OCI-LY7 (cell line): ENCODE measurements at regions of chr15 and their contacts with region 1.

Region 1: GRCh38 chr15:34209421-34210282 is at the start of gene KATNBL1:
- DNase-seq: peak; percentile 97
- H3K4me3 ChIP-seq: peak within 1 kb of the TSS; percentile 79
- H3K27ac ChIP-seq: peak within 1 kb of the TSS; percentile 54
- H3K4me1 ChIP-seq: peaks cover 14% of the 10 kb centered on the region
- CTCF ChIP-seq: peak; percentile 85
- total RNA-seq, gene KATNBL1: 44.8 and 47.5 TPM in 2 replicates

Region 2: GRCh38 chr15:34056936-34057335 is 152.7 kb before region 1 on chr15:
- CTCF ChIA-PET with region 1: no interaction called
- POLR2A ChIA-PET with region 1: no interaction called
- intact Hi-C with region 1: loop called (anchors 1 kb)
- DNase-seq: no peak
- H3K4me3 ChIP-seq: no peak overlapping the region
- H3K27ac ChIP-seq: no peak overlapping the region
- H3K4me1 ChIP-seq: no peaks in the 10 kb centered on the region
- CTCF ChIP-seq: no peak

Region 3: GRCh38 chr15:34101366-34102175 is 108.1 kb before region 1 on chr15 and contains the starts of genes EMC7 and PGBD4:
- CTCF ChIA-PET with region 1: no interaction called
- POLR2A ChIA-PET with region 1: interaction called, 8 read pairs
- intact Hi-C with region 1: loop called (anchors 5 kb)
- DNase-seq: peak; percentile 98
- H3K4me3 ChIP-seq: peak within 1 kb of the TSS; percentile 90
- H3K27ac ChIP-seq: peak within 1 kb of the TSS; percentile 29
- H3K4me1 ChIP-seq: peaks cover 24% of the 10 kb centered on the region
- CTCF ChIP-seq: no peak
- total RNA-seq, gene EMC7: 14.7 and 15.7 TPM in 2 replicates
- total RNA-seq, gene PGBD4: 3.6 and 4.4 TPM in 2 replicates

Region 4: GRCh38 chr15:34109797-34110663 is 99.6 kb before region 1 on chr15:
- CTCF ChIA-PET with region 1: interaction called, 4 read pairs
- POLR2A ChIA-PET with region 1: interaction called, 11 read pairs
- intact Hi-C with region 1: loop called (anchors 1 kb)
- DNase-seq: peak; percentile 49
- H3K4me3 ChIP-seq: no peak overlapping the region
- H3K27ac ChIP-seq: no peak overlapping the region
- H3K4me1 ChIP-seq: no peaks in the 10 kb centered on the region
- CTCF ChIP-seq: peak; percentile 92

Region 5: GRCh38 chr15:34246276-34246976 is 36.8 kb after region 1 on chr15:
- CTCF ChIA-PET with region 1: no interaction called
- POLR2A ChIA-PET with region 1: no interaction called
- intact Hi-C with region 1: no loop called
- DNase-seq: no peak
- H3K4me3 ChIP-seq: no peak overlapping the region
- H3K27ac ChIP-seq: no peak overlapping the region
- H3K4me1 ChIP-seq: no peaks in the 10 kb centered on the region
- CTCF ChIP-seq: no peak

Region 6: DNA sequence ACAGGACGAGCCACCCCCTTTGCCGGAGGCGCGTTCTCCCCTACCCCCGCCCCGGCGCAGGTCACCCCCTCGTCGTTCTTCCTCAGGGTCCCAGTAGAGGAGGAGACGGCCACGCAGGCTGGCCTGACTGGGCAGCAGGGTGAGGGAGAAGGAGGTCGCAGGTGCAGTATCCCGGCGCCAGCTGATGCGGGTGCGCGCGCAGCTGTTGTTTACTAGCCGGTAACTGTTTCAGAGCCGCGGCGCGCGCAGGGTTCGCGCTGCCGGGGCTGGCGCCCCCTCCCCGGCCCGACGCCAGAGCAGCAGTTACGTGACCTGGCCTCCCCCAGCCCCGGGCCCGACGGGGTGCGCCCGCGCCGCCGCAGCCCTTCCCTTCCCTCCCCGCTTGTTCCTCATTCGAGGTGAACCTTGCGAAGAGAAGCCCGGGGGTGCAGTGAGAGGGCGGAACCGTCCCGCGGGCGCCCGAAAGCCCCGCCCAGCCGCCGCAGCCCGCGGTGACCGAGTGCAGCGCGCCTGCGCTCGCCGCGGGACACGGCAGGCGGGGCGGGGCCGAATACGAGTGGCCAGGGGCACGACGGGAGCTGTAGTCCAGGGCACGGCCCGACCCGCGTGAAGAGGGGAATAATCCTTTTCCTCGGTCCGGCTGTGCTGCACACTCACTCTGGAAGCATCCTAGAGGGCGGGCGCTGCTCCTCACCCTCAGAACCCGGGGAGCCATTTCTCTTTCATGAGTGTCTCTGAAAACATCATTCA is 128.1 kb after region 1 on chr15 and contains the start of gene SLC12A6:
- CTCF ChIA-PET with region 1: no interaction called
- POLR2A ChIA-PET with region 1: no interaction called
- intact Hi-C with region 1: loop called (anchors 5 kb)
- DNase-seq: peak; percentile 90
- H3K4me3 ChIP-seq: peak within 1 kb of the TSS; percentile 90
- H3K27ac ChIP-seq: peak within 1 kb of the TSS; percentile 65
- H3K4me1 ChIP-seq: peaks cover 49% of the 10 kb centered on the region
- CTCF ChIP-seq: 0 out of 2 replicates have a peak, but pooled peaks have one; percentile 15
- total RNA-seq, gene SLC12A6: 8.9 and 11.5 TPM in 2 replicates

Region 7: DNA sequence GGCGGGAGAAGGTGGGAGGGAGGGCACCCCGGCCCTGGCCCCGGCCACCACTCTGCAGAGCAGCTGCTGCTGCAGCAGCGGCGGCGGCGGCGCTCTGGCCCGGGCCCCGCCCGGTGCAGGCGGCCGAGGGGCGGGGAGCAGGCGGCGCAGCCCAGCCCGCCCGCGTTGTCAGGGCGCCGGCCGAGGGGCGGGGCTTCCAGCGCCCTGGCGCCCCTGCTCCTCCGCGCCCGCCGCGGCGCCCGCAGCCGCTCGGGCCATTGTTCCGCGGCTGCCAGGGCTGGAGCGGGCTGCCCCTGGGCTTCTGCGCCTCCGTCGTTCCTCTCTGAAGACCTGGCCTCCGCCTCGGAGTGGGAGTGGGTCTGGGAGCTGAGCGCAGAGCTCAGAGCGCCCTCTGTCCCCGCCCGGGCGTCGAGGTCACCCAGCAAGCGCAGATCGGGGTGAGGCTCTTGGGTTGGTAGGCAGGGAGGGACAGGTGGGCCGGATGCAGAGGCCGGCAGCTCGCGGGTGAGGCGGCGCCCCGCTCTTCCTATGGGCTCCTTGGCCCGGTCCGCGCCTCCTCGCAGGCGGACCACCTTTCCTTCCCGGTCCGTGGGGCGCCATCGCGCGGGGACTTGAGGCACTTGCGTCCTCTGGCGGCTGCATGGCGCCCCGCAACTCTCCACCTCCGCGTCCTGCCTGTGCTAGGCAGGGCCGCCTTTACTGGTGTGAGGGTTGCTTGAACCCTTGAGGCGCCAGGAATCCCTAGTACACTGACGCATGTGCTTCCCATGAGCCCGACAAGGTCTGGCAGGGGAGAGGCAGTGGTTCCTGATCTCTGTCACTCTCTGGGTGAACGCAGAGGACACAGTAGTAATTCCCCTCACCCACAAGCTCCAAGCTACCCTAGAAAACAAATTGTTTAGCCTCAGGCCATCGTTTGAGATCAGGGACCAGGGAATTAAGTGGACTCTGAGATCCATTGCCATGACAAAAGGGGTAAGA is 157.7 kb after region 1 on chr15 and contains the start of gene LPCAT4:
- CTCF ChIA-PET with region 1: no interaction called
- POLR2A ChIA-PET with region 1: interaction called, 6 read pairs
- intact Hi-C with region 1: loop called (anchors 10 kb)
- DNase-seq: peak; percentile 95
- H3K4me3 ChIP-seq: peak within 1 kb of the TSS; percentile 99
- H3K27ac ChIP-seq: peak within 1 kb of the TSS; percentile 90
- H3K4me1 ChIP-seq: peaks cover 18% of the 10 kb centered on the region
- CTCF ChIP-seq: peak; percentile 91
- total RNA-seq, gene LPCAT4: 27.8 and 44.3 TPM in 2 replicates

Region 8: DNA sequence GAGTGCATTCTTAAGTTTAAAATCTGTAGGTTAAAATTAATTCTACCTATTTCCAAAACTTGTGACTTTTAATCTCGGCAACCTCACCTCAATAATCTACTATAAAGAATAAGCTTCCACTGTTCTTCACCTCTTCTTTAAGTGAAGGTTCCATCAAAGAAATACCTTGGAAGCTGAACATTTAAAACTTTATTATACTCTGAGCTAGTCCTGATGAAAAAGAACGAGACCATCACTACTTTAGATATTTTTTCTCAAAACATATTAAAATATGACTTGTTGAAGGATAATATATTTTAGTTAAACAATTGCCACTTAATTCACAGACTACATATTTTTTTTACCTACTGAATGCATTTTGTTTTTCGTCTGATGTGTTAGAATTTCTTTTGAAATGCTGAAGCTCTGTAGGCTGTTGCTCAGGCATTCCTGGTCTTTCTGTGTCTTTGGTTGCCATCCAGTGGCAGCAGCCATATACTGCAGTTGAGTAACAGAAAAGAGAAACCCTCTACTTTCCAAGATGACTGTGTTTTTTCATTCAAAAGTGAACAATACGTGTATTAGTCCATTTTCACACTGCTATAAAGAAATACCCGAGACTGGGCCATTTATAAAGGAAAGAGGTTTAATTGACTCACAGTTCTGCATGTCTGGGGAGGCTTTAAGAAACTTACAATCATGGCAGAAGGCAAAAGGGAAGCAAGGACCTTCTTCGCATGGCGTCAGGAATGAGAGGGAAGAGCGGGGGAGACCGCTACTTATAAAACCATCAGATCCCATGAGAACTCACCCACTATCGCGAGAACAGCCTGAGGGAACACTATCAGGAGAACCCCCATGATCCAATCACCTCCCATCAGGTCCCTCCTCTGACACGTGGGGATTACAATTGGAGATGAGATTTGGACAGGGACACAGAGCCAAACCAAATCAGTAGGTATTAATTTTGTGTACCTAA is 378.3 kb after region 1 on chr15:
- CTCF ChIA-PET with region 1: no interaction called
- POLR2A ChIA-PET with region 1: no interaction called
- intact Hi-C with region 1: loop called (anchors 5 kb)
- DNase-seq: peak; percentile 67
- H3K4me3 ChIP-seq: no peak overlapping the region
- H3K27ac ChIP-seq: no peak overlapping the region
- H3K4me1 ChIP-seq: peaks cover 5% of the 10 kb centered on the region
- CTCF ChIP-seq: peak; percentile 93